Right ventricle myocardium inferior (tissue), 1 donor: ENCODE measurements at regions of chr12 and their contacts with region 1.

Region 1: GRCh38 chr12:62799126-62799736 is 135.7 kb downstream of the PPM1H start:
- DNase-seq: no peak
- ATAC-seq: peak; percentile 64

Region 2: GRCh38 chr12:62435303-62436163 is 363.7 kb before region 1 on chr12:
- intact Hi-C with region 1: loop called (anchors 5 kb)
- DNase-seq: peak; percentile 57
- ATAC-seq: peak; percentile 76

Region 3: GRCh38 chr12:62848421-62848820 is 49.2 kb after region 1 on chr12:
- intact Hi-C with region 1: no loop called
- DNase-seq: no peak
- ATAC-seq: no peak